Upper lobe of right lung (tissue), 1 donor: ENCODE measurements at regions of chr1 and their contacts with region 1.

Region 1: DNA sequence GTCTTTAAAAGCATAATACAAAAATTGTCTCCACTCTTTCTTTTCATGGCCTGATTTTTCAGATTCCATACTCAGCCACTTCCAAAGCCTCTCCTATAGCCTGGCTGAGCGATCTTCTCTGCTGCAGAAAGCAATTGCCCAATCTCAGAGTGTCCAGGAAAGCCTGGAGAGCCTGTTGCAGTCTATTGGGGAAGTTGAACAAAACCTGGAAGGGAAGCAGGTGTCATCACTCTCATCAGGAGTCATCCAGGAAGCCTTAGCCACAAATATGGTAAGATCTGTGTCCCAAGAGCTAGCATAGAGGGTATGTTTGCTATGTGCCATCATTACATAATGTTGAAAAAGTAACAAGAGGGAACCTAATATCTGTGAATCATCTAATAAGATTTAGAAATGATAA is 130.7 kb upstream of the BMP8A start:
- DNase-seq: no peak
- ATAC-seq: peak; percentile 49
- H3K4me3 ChIP-seq: no peak overlapping the region
- H3K27ac ChIP-seq: no peak overlapping the region
- H3K4me1 ChIP-seq: peaks cover 7% of the 10 kb centered on the region
- H3K27me3 ChIP-seq: no peaks in the 10 kb centered on the region
- CTCF ChIP-seq: no peak

Region 2: DNA sequence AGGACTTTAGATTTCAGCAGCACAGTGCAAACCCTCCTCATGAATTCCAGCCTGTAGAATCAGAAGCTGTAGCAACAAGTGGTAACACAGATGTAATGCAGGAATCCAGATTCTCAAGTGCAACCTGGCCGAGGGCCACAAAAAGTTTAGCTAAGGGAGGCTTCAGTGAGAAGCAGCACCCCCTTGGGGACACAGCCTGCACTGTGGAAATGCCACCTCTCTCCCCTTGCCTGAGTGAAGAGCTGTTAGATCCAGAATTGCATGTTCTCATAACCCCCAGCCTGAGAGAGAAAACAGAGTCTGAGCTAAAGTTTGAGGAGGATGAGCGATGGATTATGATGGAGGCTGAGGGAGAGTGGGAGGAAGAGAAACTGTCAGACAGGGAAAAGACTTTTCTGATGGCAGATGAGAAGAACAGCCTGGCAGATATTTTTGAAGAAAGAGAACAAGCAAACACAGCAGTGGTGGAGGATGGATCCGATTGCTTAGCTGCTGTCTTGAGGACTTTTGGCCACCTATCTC is 50.2 kb after region 1 on chr1:
- intact Hi-C with region 1: loop called (anchors 10 kb)
- DNase-seq: peak; percentile 87
- ATAC-seq: peak; percentile 49
- H3K4me3 ChIP-seq: peak overlapping the region; percentile 25
- H3K27ac ChIP-seq: no peak overlapping the region
- H3K4me1 ChIP-seq: peaks cover 71% of the 10 kb centered on the region
- H3K27me3 ChIP-seq: no peaks in the 10 kb centered on the region
- CTCF ChIP-seq: peak; percentile 69